Endothelial cell of umbilical vein (primary cell): ENCODE measurements at regions of chr4 and their contacts with region 1.

Region 1: GRCh38 chr4:107896158-107897045 is 34.9 kb upstream of the CYP2U1 start:
- DNase-seq: peak; percentile 97
- H3K4me3 ChIP-seq: peak overlapping the region in 2 of 3 experiments; percentile 15 to 59
- H3K27ac ChIP-seq: peak overlapping the region; percentile 99
- H3K4me1 ChIP-seq: peaks cover 34% of the 10 kb centered on the region
- H3K27me3 ChIP-seq: no peaks in the 10 kb centered on the region
- CTCF ChIP-seq: no peak
- POLR2A ChIP-seq: peak; percentile 74

Region 2: GRCh38 chr4:107120661-107121060 is 775.7 kb before region 1 on chr4:
- CTCF ChIA-PET with region 1: no interaction called
- POLR2A ChIA-PET with region 1: no interaction called
- dilution Hi-C with region 1: no loop called
- intact Hi-C with region 1: loop called (anchors 10 kb)
- DNase-seq: peak; percentile 70
- H3K4me3 ChIP-seq: no peak overlapping the region
- H3K27ac ChIP-seq: no peak overlapping the region
- H3K4me1 ChIP-seq: peaks cover 35% of the 10 kb centered on the region
- H3K27me3 ChIP-seq: no peaks in the 10 kb centered on the region
- CTCF ChIP-seq: no peak
- POLR2A ChIP-seq: no peak

Region 3: GRCh38 chr4:107853444-107854355 is 42.7 kb before region 1 on chr4:
- CTCF ChIA-PET with region 1: interaction called, 11 read pairs
- POLR2A ChIA-PET with region 1: no interaction called
- dilution Hi-C with region 1: no loop called
- intact Hi-C with region 1: no loop called
- DNase-seq: peak; percentile 71
- H3K4me3 ChIP-seq: peak overlapping the region in 1 of 3 experiments; percentile 37
- H3K27ac ChIP-seq: peak overlapping the region; percentile 67
- H3K4me1 ChIP-seq: peaks cover 21% of the 10 kb centered on the region
- H3K27me3 ChIP-seq: no peaks in the 10 kb centered on the region
- CTCF ChIP-seq: no peak
- POLR2A ChIP-seq: no peak

Region 4: GRCh38 chr4:107863850-107864371 is 32.5 kb before region 1 on chr4:
- CTCF ChIA-PET with region 1: no interaction called
- POLR2A ChIA-PET with region 1: no interaction called
- dilution Hi-C with region 1: no loop called
- intact Hi-C with region 1: loop called (anchors 1 kb)
- DNase-seq: peak; percentile 77
- H3K4me3 ChIP-seq: no peak overlapping the region
- H3K27ac ChIP-seq: peak overlapping the region; percentile 79
- H3K4me1 ChIP-seq: peaks cover 27% of the 10 kb centered on the region
- H3K27me3 ChIP-seq: no peaks in the 10 kb centered on the region
- CTCF ChIP-seq: no peak
- POLR2A ChIP-seq: no peak

Region 5: GRCh38 chr4:107870916-107871786 is 25.3 kb before region 1 on chr4:
- CTCF ChIA-PET with region 1: interaction called, 12 read pairs
- POLR2A ChIA-PET with region 1: no interaction called
- dilution Hi-C with region 1: no loop called
- intact Hi-C with region 1: loop called (anchors 1 kb)
- DNase-seq: peak; percentile 74
- H3K4me3 ChIP-seq: peak overlapping the region in 2 of 3 experiments; percentile 16 to 25
- H3K27ac ChIP-seq: peak overlapping the region; percentile 32
- H3K4me1 ChIP-seq: peaks cover 32% of the 10 kb centered on the region
- H3K27me3 ChIP-seq: no peaks in the 10 kb centered on the region
- CTCF ChIP-seq: no peak
- POLR2A ChIP-seq: no peak

Region 6: GRCh38 chr4:107922486-107923483 is 26.4 kb after region 1 on chr4:
- CTCF ChIA-PET with region 1: no interaction called
- POLR2A ChIA-PET with region 1: no interaction called
- dilution Hi-C with region 1: no loop called
- intact Hi-C with region 1: no loop called
- DNase-seq: no peak
- H3K4me3 ChIP-seq: no peak overlapping the region
- H3K27ac ChIP-seq: no peak overlapping the region
- H3K4me1 ChIP-seq: no peaks in the 10 kb centered on the region
- H3K27me3 ChIP-seq: no peaks in the 10 kb centered on the region
- CTCF ChIP-seq: no peak
- POLR2A ChIP-seq: no peak

Region 7: DNA sequence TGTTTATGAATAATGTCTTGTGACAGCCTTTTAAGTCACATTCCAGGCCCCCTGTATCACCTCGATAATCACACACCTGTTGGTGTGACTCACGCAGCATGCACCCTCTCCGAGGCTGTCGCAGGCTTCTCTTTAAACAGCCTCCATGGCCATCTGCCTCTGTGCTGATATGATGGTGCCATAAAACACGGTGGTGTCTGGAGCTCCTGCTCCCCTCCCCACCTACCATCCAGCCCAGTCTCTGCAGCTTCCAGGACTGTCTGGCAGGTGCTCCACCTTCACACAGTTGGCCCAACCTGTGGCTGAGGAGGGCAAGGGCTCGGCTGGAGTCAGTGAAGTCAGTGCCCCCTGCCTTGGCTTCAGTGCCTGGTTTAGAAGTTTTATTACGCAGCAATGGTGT is 550.2 kb after region 1 on chr4:
- CTCF ChIA-PET with region 1: no interaction called
- POLR2A ChIA-PET with region 1: no interaction called
- dilution Hi-C with region 1: no loop called
- intact Hi-C with region 1: no loop called
- DNase-seq: no peak
- H3K4me3 ChIP-seq: no peak overlapping the region
- H3K27ac ChIP-seq: no peak overlapping the region
- H3K4me1 ChIP-seq: no peaks in the 10 kb centered on the region
- H3K27me3 ChIP-seq: no peaks in the 10 kb centered on the region
- CTCF ChIP-seq: no peak
- POLR2A ChIP-seq: no peak